AG04450 (cell line): ENCODE measurements at regions of chr3 and their contacts with region 1.

Region 1: DNA sequence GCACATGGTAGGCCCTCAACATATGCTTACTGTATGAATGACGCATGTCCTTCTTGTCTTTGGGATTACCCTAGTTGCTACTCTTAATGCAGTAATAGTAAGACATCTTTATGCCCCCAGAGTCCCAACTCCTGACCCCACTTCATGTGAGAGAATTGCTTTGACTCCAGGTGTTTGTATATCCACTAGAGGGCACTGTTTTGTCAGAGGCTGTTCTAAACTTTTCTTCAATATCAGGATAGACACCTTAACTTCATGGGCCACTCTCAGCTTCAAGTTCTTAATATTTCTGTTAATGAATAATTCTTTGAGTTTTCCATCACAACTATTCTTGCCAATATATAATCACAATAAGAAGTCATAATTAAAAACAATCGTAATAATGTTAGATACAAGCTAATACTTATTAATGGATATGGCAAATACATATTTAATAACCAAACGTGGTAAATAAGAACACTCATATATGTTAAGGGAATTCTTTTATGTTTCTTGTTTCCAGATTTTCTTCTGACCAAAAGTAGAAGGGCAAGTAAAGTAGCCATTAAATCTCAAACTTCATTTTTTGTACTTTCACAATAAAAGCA is 337.2 kb upstream of the DNAJC19 start:
- DNase-seq: no peak
- H3K4me3 ChIP-seq: no peak overlapping the region
- H3K27ac ChIP-seq: no peak overlapping the region
- H3K27me3 ChIP-seq: no peaks in the 10 kb centered on the region
- CTCF ChIP-seq: peak; percentile 69

Region 2: DNA sequence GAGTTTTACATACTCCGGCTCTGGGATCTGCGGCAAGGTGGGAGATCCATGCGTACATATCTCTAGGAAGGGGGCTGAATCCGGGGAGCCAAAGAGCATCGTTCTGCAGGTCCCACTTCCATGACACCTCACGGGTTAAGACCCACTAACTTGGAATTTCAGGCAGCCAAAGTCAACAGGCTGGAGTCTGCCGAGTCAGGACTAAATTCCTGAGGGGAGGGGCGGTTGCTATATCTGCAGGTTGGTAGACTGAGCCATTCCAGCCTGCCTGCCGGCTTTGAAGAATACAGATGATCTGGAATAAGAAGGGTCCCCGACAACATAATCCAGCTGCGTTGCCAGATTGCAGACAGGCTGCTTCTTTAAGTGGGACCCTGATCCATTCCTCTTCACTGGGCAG is 1224.6 kb before region 1 on chr3:
- CTCF ChIA-PET with region 1: no interaction called
- POLR2A ChIA-PET with region 1: no interaction called
- DNase-seq: no peak
- H3K4me3 ChIP-seq: no peak overlapping the region
- H3K27ac ChIP-seq: no peak overlapping the region
- H3K27me3 ChIP-seq: no peaks in the 10 kb centered on the region
- CTCF ChIP-seq: no peak

Region 3: GRCh38 chr3:181267312-181267711 is 59.4 kb before region 1 on chr3:
- CTCF ChIA-PET with region 1: no interaction called
- POLR2A ChIA-PET with region 1: no interaction called
- DNase-seq: no peak
- H3K4me3 ChIP-seq: no peak overlapping the region
- H3K27ac ChIP-seq: no peak overlapping the region
- H3K27me3 ChIP-seq: peaks cover 2% of the 10 kb centered on the region
- CTCF ChIP-seq: no peak

Region 4: DNA sequence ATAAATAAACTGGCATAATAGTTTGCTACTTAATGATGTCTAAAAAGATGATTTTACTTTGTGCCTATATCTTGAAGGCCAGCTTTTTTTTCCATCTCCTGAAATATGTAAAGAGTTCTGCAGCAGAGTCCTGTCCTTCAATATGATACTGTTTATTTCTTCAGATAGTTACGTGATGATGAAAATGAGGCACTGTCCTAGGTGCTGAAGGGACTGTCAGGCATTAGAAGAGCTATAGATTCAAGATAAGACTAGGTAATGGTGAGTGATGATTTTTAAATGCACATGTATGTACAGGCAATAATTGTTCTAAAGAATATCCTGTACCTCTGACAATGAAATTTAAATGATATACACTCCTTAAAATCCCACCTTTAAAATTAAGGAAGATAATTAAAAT is 10.2 kb before region 1 on chr3:
- CTCF ChIA-PET with region 1: interaction called, 17 read pairs
- POLR2A ChIA-PET with region 1: no interaction called
- DNase-seq: no peak
- H3K4me3 ChIP-seq: no peak overlapping the region
- H3K27ac ChIP-seq: no peak overlapping the region
- H3K27me3 ChIP-seq: peaks cover 2% of the 10 kb centered on the region
- CTCF ChIP-seq: no peak